ENCODE measurements at regions of chr10 and their contacts with region 1.

Region 1: GRCh38 chr10:77756319-77757232 is 119.0 kb upstream of the KCNMA1 start:
- DNase-seq: no peak
- H3K4me3 ChIP-seq: no peak overlapping the region
- H3K27me3 ChIP-seq: no peaks in the 10 kb centered on the region
- CTCF ChIP-seq: peak; percentile 82

Region 2: DNA sequence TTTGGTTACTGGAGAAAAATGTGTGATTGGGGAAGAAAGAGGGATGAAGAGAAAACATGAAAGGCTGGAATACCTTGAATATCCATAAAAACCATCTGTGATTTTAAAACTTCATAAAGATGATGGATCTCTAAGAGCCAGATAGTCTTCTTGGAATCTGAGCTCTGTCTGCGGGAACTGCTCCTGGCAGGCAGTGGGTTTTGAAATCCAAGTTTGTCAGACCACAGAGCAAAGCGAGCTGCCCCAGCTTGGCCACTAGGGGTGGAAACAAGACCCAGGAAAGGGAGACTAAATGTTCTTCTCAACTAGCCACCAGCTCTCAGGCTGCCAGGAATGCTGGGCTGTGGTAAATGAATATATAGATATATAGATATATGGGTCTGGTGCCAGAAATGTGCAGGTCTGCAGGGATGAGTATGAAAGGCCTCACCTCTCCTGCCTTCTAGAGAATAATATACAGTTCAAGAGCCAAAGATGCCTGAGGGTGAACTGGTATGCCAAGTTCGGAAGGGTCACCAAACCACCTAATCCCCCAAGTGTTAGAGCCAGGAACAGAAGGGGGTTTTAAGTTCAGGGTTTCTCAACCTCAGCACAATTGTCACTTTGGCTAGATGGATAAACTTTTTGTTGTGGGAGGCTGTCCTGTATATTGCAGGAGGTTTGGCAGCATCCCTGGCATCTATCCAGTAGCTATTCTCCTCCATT is 327.7 kb before region 1 on chr10:
- CTCF ChIA-PET with region 1: no interaction called
- POLR2A ChIA-PET with region 1: interaction called, 17 read pairs
- DNase-seq: no peak
- H3K4me3 ChIP-seq: no peak overlapping the region
- H3K27me3 ChIP-seq: no peaks in the 10 kb centered on the region
- CTCF ChIP-seq: peak; percentile 71

Region 3: GRCh38 chr10:77721815-77722214 is 34.8 kb before region 1 on chr10:
- CTCF ChIA-PET with region 1: interaction called, 149 read pairs
- POLR2A ChIA-PET with region 1: no interaction called
- DNase-seq: no peak
- H3K4me3 ChIP-seq: no peak overlapping the region
- H3K27me3 ChIP-seq: no peaks in the 10 kb centered on the region
- CTCF ChIP-seq: no peak

Region 4: DNA sequence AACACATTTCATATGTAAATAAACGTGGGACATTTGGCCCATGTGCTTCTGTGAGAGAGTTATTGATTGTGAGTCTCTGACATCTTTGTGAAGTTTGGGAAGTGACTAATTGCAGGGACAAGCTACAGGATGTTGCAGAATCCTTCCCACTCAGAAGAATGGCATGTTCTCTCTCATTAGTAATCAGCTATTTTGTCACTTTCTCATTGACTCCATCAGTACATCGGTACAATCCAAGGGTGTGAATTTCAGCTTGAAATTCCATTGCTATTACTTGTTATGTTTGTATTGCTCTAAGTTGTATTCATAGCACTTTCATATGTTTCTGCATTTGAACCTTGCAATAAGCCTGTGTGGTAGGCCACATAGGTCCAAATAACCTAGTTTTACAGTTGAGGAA is 19.0 kb before region 1 on chr10:
- CTCF ChIA-PET with region 1: interaction called, 12 read pairs
- POLR2A ChIA-PET with region 1: no interaction called
- DNase-seq: peak; percentile 91
- H3K4me3 ChIP-seq: no peak overlapping the region
- H3K27me3 ChIP-seq: no peaks in the 10 kb centered on the region
- CTCF ChIP-seq: no peak

Region 5: DNA sequence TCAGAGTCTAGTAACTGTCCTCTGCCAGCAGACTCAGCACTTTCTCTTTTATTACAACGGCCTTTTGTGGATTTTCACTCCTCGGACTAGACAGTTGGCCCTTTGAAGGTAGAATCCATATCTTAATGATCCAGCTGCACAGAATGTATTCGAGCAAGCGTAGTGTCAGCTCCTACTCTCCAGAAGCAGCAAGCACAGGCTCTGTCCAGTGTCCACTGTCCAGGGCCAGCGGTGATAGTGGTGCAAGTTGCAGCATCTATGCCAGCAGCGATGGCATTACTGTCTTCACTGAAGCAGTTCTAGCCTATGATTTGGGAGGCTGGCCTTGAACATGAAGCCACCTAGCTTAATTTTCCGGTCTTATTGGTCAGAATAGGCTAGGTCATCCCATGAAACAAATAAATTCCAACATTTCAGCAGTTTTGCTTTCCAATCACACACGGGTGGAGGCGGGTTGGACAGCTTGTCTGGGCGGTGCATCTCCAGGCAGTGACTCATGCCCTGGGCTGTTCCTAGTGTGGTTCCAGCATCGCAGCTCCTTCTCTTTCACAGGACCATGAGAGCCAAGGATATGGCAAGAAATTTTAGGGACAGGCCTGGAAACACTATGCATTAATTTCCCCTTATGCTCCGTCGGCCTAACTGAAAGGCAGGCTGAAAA is 10.4 kb before region 1 on chr10:
- CTCF ChIA-PET with region 1: interaction called, 23 read pairs
- POLR2A ChIA-PET with region 1: no interaction called
- DNase-seq: no peak
- H3K4me3 ChIP-seq: no peak overlapping the region
- H3K27me3 ChIP-seq: no peaks in the 10 kb centered on the region
- CTCF ChIP-seq: no peak

Region 6: DNA sequence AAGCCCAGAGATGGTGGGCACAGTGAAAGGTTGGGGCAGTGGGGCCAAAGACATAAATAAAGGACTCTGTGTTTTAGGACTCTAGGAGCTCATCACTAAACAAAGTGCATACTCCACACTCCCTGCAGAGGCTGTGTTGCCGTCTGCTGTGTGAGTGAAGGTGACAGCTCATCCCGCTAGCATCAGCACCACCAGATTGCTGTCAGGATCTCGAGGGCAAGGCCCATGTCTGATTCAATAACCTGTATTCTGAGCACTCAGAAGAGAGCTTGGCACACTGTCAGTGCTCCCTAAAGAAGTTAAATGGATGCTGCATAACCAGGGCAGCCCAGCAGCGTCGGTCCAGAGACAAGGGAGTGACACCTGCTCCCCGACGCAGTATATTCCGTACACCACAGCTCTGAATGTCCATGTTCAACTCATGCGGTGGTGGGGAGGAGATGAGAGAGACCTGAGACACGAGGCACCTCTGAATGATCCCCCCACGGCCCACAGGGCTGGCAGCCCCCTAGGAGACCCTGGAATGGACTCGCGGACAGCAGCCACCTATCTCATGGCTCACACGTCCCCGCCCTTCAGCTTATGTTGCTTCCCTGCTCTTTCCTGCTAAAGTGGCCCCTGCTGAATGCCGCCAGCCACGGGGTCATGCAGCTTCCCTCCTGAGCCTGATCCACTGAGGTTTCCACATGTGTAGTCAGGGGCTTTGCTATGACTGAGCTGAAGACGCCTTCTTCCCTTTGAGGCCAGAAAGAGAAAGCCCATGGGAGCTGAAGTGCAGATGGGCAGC is 13.7 kb after region 1 on chr10:
- CTCF ChIA-PET with region 1: interaction called, 31 read pairs
- POLR2A ChIA-PET with region 1: no interaction called
- DNase-seq: no peak
- H3K4me3 ChIP-seq: no peak overlapping the region
- H3K27me3 ChIP-seq: no peaks in the 10 kb centered on the region
- CTCF ChIP-seq: no peak

Measured in BJ (cell line).